ENCODE measurements at regions of chr3 and their contacts with region 1.

Region 1: GRCh38 chr3:79019137-79019923 is 748.5 kb downstream of the ROBO1 start:
- DNase-seq: peak; percentile 77 to 97 (median 82)

Region 2: DNA sequence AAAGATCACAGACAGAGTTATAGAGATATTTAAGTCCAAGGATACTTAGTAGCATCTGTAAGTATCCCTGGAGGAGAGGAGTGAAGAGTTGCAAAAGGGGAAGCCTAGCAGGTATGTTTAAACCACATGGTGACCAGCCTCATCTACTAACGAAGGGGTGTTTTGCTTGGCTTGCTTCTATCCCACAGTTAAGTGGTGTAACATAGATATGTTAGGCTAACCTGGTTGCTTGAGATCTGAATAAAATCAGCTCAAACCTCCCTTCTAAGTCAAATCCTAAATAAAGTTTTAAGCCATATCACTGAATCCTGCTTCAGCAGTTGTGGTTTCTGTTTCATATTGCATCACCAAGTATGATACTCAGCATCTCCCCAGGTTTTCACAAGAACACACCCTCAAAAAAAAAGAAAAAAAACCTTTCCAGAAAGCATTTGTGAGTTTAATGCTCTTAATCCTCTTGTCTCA is 131.8 kb before region 1 on chr3:
- intact Hi-C with region 1: loop called (anchors 10 kb)
- DNase-seq: no peak

Region 3: DNA sequence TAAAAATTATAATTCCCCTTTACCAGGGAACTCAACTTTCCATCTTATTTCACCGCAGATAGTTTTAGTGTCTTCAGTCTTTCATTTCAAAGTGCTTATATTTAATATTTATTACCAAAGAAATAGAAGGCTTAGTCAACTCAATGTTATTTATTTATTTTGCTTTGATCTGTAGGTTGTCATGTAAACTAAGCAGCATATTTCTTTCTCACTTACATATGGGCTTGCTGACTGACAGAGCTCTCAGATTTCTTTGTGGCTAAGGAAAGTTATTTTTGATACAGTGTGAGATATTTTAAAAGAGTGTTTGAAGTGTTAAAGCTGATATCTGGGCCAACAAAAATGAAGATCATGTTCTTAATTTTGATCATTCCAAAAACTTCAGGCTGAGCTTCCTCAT is 417.1 kb after region 1 on chr3:
- intact Hi-C with region 1: no loop called
- DNase-seq: no peak

Measured in posterior cingulate gyrus (tissue), 11 donors.